Lower lobe of right lung (tissue), 2 donors: ENCODE measurements at regions of chr1 and their contacts with region 1.

Region 1: DNA sequence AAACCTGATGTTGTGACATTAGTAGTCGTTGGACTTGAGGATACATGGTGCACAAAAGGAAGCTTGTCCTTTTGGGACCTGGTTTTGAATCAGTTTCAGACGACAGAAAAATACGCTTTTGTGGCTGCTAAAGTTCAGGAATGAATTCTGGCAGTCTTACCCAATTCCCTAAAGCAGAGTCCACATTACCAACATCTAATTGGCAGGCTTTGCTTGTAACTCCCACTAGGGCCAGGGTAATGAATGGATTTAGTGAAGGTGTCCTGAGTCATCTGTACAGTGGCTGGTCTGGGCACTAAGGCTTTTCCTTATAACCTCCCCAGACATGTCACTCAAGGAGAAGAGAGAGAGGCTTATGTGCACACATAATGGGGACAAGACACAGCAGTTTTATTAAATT is 66.2 kb upstream of the RNPC3 start:
- DNase-seq: no peak
- ATAC-seq: no peak
- H3K4me3 ChIP-seq: no peak overlapping the region
- H3K27ac ChIP-seq: no peak overlapping the region
- H3K4me1 ChIP-seq: no peaks in the 10 kb centered on the region
- H3K27me3 ChIP-seq: no peaks in the 10 kb centered on the region
- CTCF ChIP-seq: no peak

Region 2: GRCh38 chr1:103106426-103107341 is 352.7 kb before region 1 on chr1:
- intact Hi-C with region 1: loop called (anchors 10 kb)
- DNase-seq: no peak
- ATAC-seq: peak; percentile 79 to 90
- H3K4me3 ChIP-seq: peak overlapping the region; percentile 44
- H3K27ac ChIP-seq: no peak overlapping the region
- H3K4me1 ChIP-seq: peaks cover 6% of the 10 kb centered on the region
- H3K27me3 ChIP-seq: no peaks in the 10 kb centered on the region
- CTCF ChIP-seq: peak; percentile 41

Region 3: GRCh38 chr1:103416681-103417318 is 42.5 kb before region 1 on chr1:
- intact Hi-C with region 1: no loop called
- DNase-seq: no peak
- ATAC-seq: no peak
- H3K4me3 ChIP-seq: no peak overlapping the region
- H3K27ac ChIP-seq: no peak overlapping the region
- H3K4me1 ChIP-seq: no peaks in the 10 kb centered on the region
- H3K27me3 ChIP-seq: no peaks in the 10 kb centered on the region
- CTCF ChIP-seq: no peak

Region 4: DNA sequence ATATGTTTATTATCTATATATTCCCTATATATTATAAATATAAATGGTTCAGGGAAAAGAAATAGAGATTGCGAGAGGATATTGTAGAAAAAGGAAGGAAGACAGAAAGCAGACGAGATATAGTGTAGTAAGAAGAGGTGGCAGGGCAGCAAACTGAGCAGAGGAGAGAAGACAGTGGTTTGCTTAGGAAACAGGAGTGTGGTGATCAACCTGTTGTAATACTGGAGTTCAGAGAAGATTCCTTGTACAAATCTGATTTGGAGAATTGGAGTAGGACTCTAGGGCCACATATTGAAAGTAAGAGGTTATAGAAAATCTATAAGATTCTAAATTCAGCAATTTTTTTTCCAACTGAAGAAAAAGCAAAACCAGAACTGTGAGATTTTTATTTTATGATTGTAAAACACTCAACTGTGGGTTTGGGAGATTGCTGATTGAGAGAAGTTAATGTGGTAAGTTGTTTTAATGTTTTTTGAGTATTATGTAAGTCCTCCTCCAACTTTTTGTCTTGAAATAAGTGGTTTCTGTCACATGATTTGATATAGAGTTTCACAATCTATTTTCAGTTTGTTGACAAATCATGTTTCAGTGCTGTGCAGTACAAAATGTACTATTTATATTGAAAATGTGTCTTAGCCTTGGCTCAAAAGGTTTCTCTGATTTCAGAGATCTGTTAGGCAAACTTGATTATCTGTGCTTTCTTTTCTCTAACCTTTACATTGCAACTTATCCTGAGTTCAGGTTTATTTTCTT is 102.5 kb after region 1 on chr1:
- intact Hi-C with region 1: no loop called
- DNase-seq: no peak
- ATAC-seq: peak; percentile 81 to 90
- H3K4me3 ChIP-seq: peak overlapping the region; percentile 10
- H3K27ac ChIP-seq: peak overlapping the region; percentile 69
- H3K4me1 ChIP-seq: peaks cover 13% of the 10 kb centered on the region
- H3K27me3 ChIP-seq: no peaks in the 10 kb centered on the region
- CTCF ChIP-seq: no peak